Left ventricle myocardium inferior (tissue), 1 donor: ENCODE measurements at regions of chr13 and their contacts with region 1.

Region 1: DNA sequence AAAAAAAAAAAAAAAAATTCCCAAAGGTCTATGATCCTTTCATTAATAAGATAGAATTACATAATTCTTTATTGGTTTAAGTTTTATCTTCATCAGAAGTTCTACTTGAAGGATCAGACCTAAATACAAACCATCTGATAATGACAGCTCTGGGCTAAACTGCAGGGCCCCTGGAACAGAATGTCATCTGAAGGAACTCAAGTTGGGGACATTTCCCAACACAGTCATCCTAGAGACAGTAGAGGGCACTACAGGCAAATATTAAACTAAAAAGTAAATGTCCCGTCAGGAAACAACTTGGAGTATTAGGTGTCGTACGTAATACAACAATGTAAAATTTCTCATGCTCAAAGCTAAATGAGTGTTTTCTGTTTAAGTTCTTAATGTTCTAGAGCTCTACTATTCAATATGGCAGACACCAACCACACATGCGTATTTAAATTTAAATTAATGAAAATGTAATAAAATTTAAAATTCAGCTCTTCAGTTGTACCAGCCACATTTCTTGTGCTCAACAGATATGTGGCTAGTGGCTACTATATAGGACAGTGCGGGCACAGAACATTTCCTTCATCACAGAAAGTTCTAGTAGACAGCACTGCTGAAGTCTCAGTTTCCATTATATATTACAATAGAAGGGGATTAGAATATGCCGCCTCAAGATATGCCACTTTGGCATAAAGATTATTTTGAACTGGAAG is 21.8 kb upstream of the NAXD start:
- DNase-seq: no peak
- H3K4me3 ChIP-seq: no peak overlapping the region
- H3K27ac ChIP-seq: no peak overlapping the region
- H3K4me1 ChIP-seq: no peaks in the 10 kb centered on the region
- H3K27me3 ChIP-seq: no peaks in the 10 kb centered on the region
- CTCF ChIP-seq: peak; percentile 79

Region 2: GRCh38 chr13:110819203-110820014 is 225.8 kb after region 1 on chr13:
- intact Hi-C with region 1: loop called (anchors 5 kb)
- DNase-seq: peak; percentile 76
- H3K4me3 ChIP-seq: no peak overlapping the region
- H3K27ac ChIP-seq: no peak overlapping the region
- H3K4me1 ChIP-seq: peaks cover 3% of the 10 kb centered on the region
- H3K27me3 ChIP-seq: no peaks in the 10 kb centered on the region
- CTCF ChIP-seq: peak; percentile 99

Region 3: GRCh38 chr13:110841846-110842245 is 248.3 kb after region 1 on chr13:
- intact Hi-C with region 1: no loop called
- DNase-seq: no peak
- H3K4me3 ChIP-seq: no peak overlapping the region
- H3K27ac ChIP-seq: no peak overlapping the region
- H3K4me1 ChIP-seq: no peaks in the 10 kb centered on the region
- H3K27me3 ChIP-seq: peaks cover 54% of the 10 kb centered on the region
- CTCF ChIP-seq: no peak